Activated CD4-positive, alpha-beta memory T cell treated with anti-CD3 and anti-CD28 coated beads for 36 hours (primary cell): ENCODE measurements at regions of chr1 and their contacts with region 1.

Region 1: GRCh38 chr1:167533851-167534300 is 15.5 kb upstream of the CD247 start:
- DNase-seq: peak; percentile 76
- H3K4me3 Mint-ChIP-seq: no peak overlapping the region
- H3K27ac Mint-ChIP-seq: no peak overlapping the region
- H3K4me1 Mint-ChIP-seq: peaks cover 4% of the 10 kb centered on the region
- H3K27me3 Mint-ChIP-seq: no peaks in the 10 kb centered on the region

Region 2: GRCh38 chr1:167263819-167264464 is 269.9 kb before region 1 on chr1:
- CTCF ChIA-PET with region 1: interaction called, 62 read pairs
- POLR2A ChIA-PET with region 1: no interaction called
- intact Hi-C with region 1: loop called (anchors 2 kb)
- DNase-seq: no peak
- H3K4me3 Mint-ChIP-seq: no peak overlapping the region
- H3K27ac Mint-ChIP-seq: no peak overlapping the region
- H3K4me1 Mint-ChIP-seq: peaks cover 23% of the 10 kb centered on the region
- H3K27me3 Mint-ChIP-seq: no peaks in the 10 kb centered on the region

Region 3: DNA sequence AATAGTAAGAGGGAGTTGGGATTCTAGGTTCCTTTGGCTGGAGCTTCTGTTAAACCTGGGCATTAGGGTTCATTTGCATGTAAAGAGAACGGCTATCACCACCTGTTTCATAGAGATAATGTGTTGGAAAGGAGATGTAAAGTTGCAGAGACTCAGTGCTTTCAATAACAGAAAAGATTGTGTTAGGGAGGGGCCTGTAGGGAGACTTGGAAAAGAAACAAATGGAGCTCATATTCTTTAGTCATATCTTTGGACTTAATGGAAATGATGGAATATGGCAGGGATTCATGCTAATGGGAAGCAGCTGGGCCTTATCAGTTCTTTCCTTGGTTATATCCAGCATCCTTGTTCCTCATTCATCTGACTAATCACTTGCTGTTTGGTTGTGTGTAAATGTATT is 160.5 kb before region 1 on chr1:
- CTCF ChIA-PET with region 1: no interaction called
- POLR2A ChIA-PET with region 1: no interaction called
- intact Hi-C with region 1: no loop called
- DNase-seq: no peak
- H3K4me3 Mint-ChIP-seq: no peak overlapping the region
- H3K27ac Mint-ChIP-seq: no peak overlapping the region
- H3K4me1 Mint-ChIP-seq: no peaks in the 10 kb centered on the region
- H3K27me3 Mint-ChIP-seq: no peaks in the 10 kb centered on the region

Region 4: GRCh38 chr1:167416506-167416905 is 117.4 kb before region 1 on chr1:
- CTCF ChIA-PET with region 1: interaction called, 17 read pairs
- POLR2A ChIA-PET with region 1: no interaction called
- intact Hi-C with region 1: no loop called
- DNase-seq: no peak
- H3K4me3 Mint-ChIP-seq: no peak overlapping the region
- H3K27ac Mint-ChIP-seq: no peak overlapping the region
- H3K4me1 Mint-ChIP-seq: peaks cover 23% of the 10 kb centered on the region
- H3K27me3 Mint-ChIP-seq: no peaks in the 10 kb centered on the region

Region 5: DNA sequence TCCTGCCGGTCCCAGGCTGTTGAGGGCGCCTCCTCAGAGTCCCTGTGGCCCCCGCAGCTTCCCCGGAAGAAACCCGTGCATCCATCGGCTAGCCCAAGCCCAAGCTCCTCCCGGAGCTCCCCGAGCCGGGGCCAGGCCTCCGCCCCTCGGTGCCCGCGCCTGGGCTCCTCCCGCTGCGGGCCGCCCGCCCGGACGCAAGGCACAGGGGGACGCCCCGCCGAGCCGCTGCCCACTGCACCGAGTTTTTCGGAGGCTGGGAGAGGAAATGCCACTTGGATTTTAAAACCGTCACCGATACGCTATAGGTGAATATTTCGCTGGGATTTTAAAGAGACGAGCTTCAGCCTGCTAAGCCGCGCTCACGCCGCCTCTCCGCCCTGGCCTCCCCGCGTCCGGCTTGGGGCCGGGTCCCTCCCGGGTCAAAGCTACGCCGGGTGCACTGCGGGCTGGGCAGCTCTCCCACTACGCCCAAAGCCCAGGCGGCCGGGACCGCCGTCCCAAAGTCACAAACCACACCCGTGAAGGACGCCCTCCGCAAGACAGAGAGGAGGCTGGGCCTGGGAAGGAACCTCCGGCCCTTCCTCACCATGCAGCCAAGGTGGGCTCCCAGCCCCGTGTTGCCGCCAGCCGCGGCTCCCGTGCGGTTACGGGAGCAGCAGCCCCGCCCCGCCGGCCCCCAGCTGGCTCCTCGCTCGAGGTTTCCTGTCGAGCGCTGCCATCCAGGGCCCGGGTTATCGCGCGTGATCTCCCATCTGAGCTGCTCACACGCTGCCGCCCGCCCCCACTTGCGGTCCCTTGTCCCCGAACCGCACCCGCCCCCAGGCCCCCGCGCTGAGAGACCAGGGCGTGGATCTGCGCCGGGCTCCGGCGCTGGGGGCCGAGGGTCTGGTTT is 78.7 kb before region 1 on chr1:
- CTCF ChIA-PET with region 1: interaction called, 17 read pairs
- POLR2A ChIA-PET with region 1: interaction called, 3 read pairs
- intact Hi-C with region 1: no loop called
- DNase-seq: peak; percentile 88
- H3K4me3 Mint-ChIP-seq: peak overlapping the region; percentile 78
- H3K27ac Mint-ChIP-seq: peak overlapping the region; percentile 84
- H3K4me1 Mint-ChIP-seq: peaks cover 64% of the 10 kb centered on the region
- H3K27me3 Mint-ChIP-seq: no peaks in the 10 kb centered on the region

Region 6: DNA sequence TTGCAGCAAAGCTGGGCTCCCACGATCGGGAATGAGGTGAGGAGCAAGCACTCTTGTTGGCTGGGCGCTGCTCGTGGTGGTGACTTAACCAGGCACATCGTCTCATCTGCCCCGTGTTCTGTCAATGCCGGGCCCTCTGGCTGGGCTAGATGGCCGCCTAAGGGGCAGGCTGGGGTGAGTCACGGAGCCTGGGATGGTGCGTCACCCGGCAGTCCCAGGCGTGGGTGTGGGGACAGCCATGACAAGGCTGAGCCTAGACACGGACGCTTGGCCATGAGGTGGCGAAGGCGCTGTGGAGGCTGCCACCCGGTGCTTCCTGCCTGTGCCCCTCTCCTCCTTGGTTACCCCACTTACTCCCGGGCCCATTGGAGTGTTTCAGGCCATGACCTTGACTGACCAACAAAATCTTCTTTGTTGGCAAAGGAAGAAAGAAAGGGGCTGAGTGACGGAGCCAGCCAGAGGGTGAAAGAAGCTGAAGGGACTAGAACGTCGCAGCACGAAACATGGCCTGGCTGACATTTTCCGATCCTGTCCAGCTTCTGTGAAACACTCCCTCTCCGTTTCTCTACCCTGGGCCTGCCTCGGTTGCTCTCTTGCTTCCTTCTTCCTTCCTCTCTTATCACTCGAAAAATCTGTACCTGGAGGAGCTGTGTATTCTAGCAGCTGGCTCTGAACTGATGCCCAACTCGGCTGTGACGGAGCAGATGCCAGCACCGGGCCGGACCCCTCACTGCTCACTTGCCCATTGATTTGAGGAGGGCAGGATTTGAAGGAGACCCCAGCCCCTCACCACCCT is 16.1 kb before region 1 on chr1:
- CTCF ChIA-PET with region 1: interaction called, 70 read pairs
- POLR2A ChIA-PET with region 1: interaction called, 10 read pairs
- intact Hi-C with region 1: no loop called
- DNase-seq: peak; percentile 96
- H3K4me3 Mint-ChIP-seq: peak overlapping the region; percentile 88
- H3K27ac Mint-ChIP-seq: peak overlapping the region; percentile 98
- H3K4me1 Mint-ChIP-seq: peaks cover 35% of the 10 kb centered on the region
- H3K27me3 Mint-ChIP-seq: no peaks in the 10 kb centered on the region

Region 7: GRCh38 chr1:167687919-167688519 is 154.1 kb after region 1 on chr1:
- CTCF ChIA-PET with region 1: interaction called, 10 read pairs
- POLR2A ChIA-PET with region 1: no interaction called
- intact Hi-C with region 1: no loop called
- DNase-seq: peak; percentile 81
- H3K4me3 Mint-ChIP-seq: no peak overlapping the region
- H3K27ac Mint-ChIP-seq: peak overlapping the region; percentile 76
- H3K4me1 Mint-ChIP-seq: peaks cover 19% of the 10 kb centered on the region
- H3K27me3 Mint-ChIP-seq: no peaks in the 10 kb centered on the region